ENCODE measurements at regions of chr18 and their contacts with region 1.

Region 1: GRCh38 chr18:36828630-36829361 is at the starts of genes KIAA1328 and TPGS2:
- DNase-seq: peak; percentile 89
- ATAC-seq: peak; percentile 96
- total RNA-seq, gene KIAA1328: 22.1 TPM
- total RNA-seq, gene TPGS2: 56.4 TPM

Region 2: GRCh38 chr18:35526476-35527120 is 1302.2 kb before region 1 on chr18:
- intact Hi-C with region 1: loop called (anchors 10 kb)
- DNase-seq: no peak
- ATAC-seq: peak; percentile 74

Region 3: GRCh38 chr18:36195427-36196122 is 633.2 kb before region 1 on chr18:
- intact Hi-C with region 1: loop called (anchors 10 kb)
- DNase-seq: no peak
- ATAC-seq: no peak